Posterior cingulate gyrus (tissue), 11 donors: ENCODE measurements at regions of chr13 and their contacts with region 1.

Region 1: GRCh38 chr13:48769107-48769704 is 115.5 kb downstream of the CYSLTR2 start:
- DNase-seq: peak in 4 of 10 donors; percentile 23 to 72 (median 56)

Region 2: GRCh38 chr13:48334534-48335127 is 434.6 kb before region 1 on chr13:
- intact Hi-C with region 1: loop called (anchors 2 kb)
- DNase-seq: no peak